Naive thymus-derived CD8-positive, alpha-beta T cell (primary cell): ENCODE measurements at regions of chr6 and their contacts with region 1.

Region 1: GRCh38 chr6:42200035-42200434 is 5.3 kb upstream of the GUCA1B start:
- DNase-seq: no peak
- ATAC-seq: no peak
- H3K4me3 Mint-ChIP-seq: no peak overlapping the region
- H3K27ac Mint-ChIP-seq: peak overlapping the region in 2 of 10 donors; percentile 85 to 92
- H3K4me1 Mint-ChIP-seq: peaks cover 0 to 4% (median 0%) of the 10 kb centered on the region in 4 donors
- H3K27me3 Mint-ChIP-seq: no peaks in the 10 kb centered on the region

Region 2: DNA sequence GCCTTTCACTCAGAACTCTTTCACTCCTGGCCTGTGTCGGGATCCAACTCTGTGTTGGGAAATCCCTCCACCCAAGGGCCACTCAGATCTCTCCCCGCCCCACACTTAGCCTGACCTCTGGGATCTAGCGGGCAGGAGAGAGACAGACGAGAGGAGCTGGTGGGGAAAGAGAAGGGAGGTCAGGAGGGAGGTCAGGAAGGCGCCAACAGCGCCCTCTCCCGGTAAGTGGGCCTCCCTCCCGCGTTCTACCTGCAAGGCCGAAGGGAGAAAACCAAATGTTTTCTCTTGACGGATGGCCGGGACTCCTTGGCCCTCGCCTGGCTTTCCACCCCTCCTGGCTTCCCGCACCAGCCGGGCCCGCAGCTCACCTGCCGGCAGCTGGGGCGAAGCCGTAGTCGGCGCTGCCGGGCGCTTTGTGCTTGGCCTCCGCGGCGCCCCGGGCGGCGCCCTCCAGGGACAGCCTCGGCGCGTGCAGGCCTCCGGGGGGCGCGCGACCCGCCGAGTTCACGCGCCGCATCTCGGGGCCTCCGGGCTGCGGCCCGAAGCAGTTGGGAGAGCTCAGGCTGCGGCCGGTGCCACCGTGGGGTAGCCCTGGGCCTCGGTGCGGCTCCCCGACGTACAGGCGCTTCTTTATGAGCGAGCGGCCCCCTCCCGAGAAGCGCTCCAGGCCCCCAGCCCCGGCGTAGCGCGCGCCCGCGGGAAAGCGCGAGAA is 95.8 kb before region 1 on chr6:
- POLR2A ChIA-PET with region 1: no interaction called
- DNase-seq: peak; percentile 46 to 85 (median 70)
- ATAC-seq: peak; percentile 90 to 93
- H3K4me3 Mint-ChIP-seq: peak overlapping the region; percentile 65 to 86 (median 72)
- H3K27ac Mint-ChIP-seq: peak overlapping the region in 8 of 10 donors; percentile 19 to 84 (median 76)
- H3K4me1 Mint-ChIP-seq: peaks cover 5 to 13% (median 8%) of the 10 kb centered on the region in 4 donors
- H3K27me3 Mint-ChIP-seq: no peaks in the 10 kb centered on the region

Region 3: DNA sequence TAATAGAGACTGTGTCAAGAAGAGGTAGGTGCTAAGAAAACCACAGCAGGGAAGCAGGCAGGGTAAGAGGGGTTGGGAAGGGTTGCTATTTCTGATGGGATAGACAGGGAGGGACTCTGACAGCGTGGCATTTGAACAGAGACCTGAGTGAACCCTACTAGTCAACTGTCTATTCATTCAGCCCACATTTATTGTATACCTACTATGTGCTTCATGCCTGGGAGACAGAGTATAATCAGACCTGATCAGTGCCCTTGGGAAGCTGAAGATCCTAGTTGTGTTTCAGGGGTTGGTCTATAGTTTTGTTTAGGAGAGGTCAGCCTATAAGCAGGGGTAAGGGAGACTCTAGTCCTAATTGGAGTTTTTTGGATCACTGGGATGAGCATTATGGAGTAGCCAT is 1943.7 kb after region 1 on chr6:
- POLR2A ChIA-PET with region 1: interaction called, 11 read pairs
- DNase-seq: peak in 1 of 10 donors; percentile 21
- ATAC-seq: no peak
- H3K4me3 Mint-ChIP-seq: no peak overlapping the region
- H3K27ac Mint-ChIP-seq: peak overlapping the region in 5 of 10 donors; percentile 18 to 61 (median 55)
- H3K4me1 Mint-ChIP-seq: peaks cover 0 to 2% (median 0%) of the 10 kb centered on the region in 4 donors
- H3K27me3 Mint-ChIP-seq: no peaks in the 10 kb centered on the region